ENCODE measurements at regions of chr6 and their contacts with region 1.

Region 1: DNA sequence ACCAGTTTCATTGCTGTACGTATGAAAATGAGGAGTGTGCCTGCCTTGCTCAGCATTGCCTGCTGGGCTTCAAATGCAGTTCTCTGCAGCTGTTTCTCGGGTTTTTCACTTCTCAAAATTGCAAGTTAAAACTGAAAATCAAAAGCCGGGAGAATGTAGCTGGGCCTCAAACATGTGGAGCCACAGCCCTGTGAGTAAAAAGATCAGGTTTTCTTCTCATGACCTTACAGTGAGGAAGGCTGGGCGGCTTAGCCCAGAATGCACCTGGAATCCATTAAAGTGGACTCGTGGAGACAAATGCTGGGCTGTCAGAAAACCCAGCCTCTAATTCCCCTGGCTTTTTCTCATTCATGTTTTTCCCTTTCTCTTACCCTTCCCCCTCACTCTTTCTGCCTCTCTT is 34.4 kb downstream of the DSE start:
- H3K4me3 Mint-ChIP-seq: peak overlapping the region; percentile 41
- H3K27ac Mint-ChIP-seq: peak overlapping the region; percentile 73
- H3K4me1 Mint-ChIP-seq: peaks cover 62% of the 10 kb centered on the region
- H3K27me3 Mint-ChIP-seq: no peaks in the 10 kb centered on the region

Region 2: DNA sequence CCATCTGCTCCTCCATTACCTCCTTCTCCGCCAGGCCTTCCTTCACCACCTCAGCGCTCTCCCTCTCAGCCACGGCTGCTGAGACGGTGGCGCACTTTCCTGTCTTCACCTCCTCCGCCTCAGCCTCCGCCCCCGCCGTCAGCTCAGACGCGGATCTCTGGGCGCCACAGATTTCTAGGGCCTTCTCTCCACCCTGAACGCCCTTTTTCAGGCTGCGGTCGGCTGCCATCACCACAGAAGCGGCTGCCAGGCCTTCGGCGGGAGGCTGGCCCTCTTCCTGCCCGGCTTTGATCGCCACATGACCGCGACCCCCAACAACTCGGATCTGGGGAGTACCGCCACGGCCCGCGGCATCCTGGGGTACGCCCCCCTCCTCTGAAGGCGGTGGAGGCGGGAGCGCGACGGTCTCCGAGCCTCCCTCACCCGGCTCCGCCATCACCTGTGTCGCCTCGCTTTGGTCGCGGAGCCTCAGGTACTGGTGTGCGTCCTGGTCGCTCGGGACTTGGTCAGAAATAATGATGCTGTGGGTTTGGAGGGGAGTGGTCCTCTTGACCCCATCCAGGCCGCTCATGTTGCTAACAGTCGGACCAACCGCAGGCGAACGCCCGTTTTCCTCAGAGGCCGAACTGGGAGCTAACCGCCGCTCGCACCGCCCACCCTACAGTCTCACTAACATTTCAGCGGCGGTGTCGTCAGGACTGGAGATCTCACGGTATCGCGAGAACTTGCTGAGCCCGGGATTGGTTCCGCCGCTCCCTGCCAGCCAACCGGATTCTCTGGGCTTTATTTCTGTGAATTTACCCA is 125.7 kb before region 1 on chr6 and contains the start of gene TSPYL1:
- intact Hi-C with region 1: loop called (anchors 5 kb)
- H3K4me3 Mint-ChIP-seq: peak within 1 kb of the TSS; percentile 91
- H3K27ac Mint-ChIP-seq: peak within 1 kb of the TSS; percentile 91
- H3K4me1 Mint-ChIP-seq: peaks cover 48% of the 10 kb centered on the region
- H3K27me3 Mint-ChIP-seq: no peaks in the 10 kb centered on the region

Region 3: DNA sequence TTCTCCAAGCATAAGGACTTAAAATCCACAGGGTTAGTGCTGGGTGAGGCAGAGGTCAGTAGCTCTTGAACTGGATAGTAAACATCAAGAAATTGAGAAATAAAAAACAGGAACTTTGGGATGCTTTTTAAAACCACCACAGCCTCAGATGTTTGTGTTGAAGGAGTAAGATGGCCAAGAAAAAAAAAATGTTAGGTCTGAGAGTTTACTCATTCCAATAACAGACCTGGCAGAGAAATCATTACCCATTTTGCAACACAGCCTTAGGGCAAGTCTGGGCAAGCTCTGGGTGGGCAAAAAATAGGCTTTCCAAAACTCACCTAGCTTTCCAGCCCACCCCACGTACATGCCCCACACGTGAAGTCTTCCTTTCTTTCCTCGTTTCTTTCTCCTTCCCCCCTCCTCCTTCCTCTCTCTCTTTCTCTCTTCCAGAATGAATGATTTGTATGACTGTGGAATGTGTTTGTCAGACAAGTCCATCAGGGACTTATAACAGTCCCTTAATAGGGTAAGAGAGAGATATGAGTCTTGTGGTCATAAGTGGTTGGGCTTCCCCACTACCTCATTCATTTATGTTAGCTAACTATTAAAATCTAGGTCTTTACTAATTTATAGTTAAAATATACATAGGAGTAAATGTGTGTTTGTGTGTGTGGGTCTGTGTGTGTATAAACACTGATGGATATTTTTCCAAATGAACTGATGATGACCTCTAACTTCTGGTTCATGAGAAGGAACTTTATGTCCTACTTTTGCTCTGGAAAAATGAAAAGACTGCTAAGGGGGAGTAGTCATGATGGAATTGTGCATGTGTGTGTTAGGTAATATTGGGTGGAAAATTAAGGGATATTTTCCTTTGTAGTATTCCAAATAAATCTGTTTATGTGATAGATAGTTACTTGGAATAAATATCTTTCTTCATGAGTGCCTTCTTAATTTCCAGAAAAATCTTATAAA is 52.3 kb before region 1 on chr6:
- intact Hi-C with region 1: no loop called
- H3K4me3 Mint-ChIP-seq: no peak overlapping the region
- H3K27ac Mint-ChIP-seq: peak overlapping the region; percentile 72
- H3K4me1 Mint-ChIP-seq: peaks cover 34% of the 10 kb centered on the region
- H3K27me3 Mint-ChIP-seq: no peaks in the 10 kb centered on the region

Region 4: DNA sequence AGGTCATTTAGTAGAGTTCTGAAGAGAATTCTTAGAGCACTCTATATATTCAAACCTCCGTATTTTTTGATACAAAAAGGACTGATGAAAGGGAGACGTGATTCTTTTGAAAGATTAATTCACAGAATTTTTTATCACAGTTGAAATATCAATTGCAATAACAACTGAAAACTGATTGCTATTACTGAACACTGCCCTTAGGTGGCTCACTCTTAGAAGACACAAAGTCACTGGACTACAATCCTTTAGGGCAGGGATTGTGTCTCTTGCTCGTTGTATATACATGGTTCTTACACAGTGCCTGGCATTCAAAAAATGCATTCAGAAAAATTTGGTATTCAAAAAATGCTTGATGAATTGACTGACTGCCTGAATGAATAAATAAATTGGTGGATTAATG is 39.0 kb after region 1 on chr6:
- intact Hi-C with region 1: loop called (anchors 5 kb)
- H3K4me3 Mint-ChIP-seq: no peak overlapping the region
- H3K27ac Mint-ChIP-seq: peak overlapping the region; percentile 70
- H3K4me1 Mint-ChIP-seq: peaks cover 66% of the 10 kb centered on the region
- H3K27me3 Mint-ChIP-seq: no peaks in the 10 kb centered on the region

Measured in dendritic cell treated with granulocyte-macrophage colony-stimulating factor and Interleukin-4, amounts not matched to agents 40 ng/mL and 50 ng/mL, for 4 days (primary cell).